ENCODE measurements at regions of chr2 and their contacts with region 1.

Region 1: DNA sequence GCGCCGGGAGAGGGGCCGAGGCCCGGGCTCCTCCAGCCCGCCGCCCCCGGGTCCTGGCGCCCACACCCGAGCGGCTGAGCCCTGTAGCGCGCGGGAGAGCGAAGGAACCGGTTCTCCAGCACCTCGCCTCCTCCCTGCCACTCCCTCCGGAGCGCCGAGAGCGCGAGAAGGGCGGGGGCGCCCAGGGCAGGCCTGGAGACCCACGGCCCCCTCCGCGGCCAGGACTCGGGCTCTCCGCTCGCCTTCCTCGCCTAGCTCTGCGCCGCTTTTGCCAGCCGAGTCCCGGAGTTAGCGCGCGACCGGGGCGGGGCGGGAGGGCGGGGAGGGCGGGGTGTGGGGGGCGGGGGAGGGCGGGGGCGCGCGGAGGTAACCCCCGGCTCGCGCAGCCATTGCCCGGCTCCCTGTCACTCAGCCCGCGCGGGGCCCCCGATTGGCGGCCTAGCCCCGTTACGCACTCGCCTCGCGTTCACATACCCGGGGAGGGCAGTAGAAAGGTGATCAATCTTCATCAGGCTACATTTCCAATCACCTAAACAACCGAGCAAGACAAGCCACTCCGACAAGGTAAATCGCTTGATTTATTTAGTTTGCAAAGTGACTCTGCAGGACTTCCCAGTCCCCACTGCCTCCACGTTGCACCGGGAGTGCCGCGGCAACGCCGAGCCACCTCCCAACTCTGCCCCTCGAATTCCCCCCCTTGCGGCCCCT is at the start of gene OTX1:
- DNase-seq: peak; percentile 80
- ATAC-seq: peak; percentile 80
- H3K4me3 Mint-ChIP-seq: peak within 1 kb of the TSS; percentile 75
- H3K27ac Mint-ChIP-seq: peak within 1 kb of the TSS; percentile 47
- H3K4me1 Mint-ChIP-seq: peaks cover 60% of the 10 kb centered on the region
- H3K27me3 Mint-ChIP-seq: peaks cover 78% of the 10 kb centered on the region
- total RNA-seq, gene OTX1: not detected

Region 2: DNA sequence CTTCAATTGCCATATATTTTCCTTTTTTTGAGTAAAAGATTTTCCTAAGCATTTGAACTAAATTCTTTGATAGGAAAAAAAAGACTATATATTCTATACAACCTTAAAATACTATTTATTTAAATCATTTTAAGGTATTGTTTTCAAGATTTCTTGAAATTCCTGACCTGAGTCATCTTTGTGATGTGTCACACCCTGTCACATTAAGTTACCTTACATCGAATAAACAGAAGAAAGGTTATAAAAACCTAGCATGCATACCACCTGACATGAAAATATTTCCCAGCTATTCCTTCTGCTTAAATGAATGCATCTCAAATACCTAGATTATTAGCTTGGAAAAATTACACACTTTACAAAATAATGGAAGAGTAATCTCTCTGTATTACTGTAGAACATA is 175.8 kb after region 1 on chr2:
- CTCF ChIA-PET with region 1: no interaction called
- POLR2A ChIA-PET with region 1: no interaction called
- intact Hi-C with region 1: no loop called
- DNase-seq: no peak
- ATAC-seq: no peak
- H3K4me3 Mint-ChIP-seq: no peak overlapping the region
- H3K27ac Mint-ChIP-seq: no peak overlapping the region
- H3K4me1 Mint-ChIP-seq: no peaks in the 10 kb centered on the region
- H3K27me3 Mint-ChIP-seq: no peaks in the 10 kb centered on the region

Region 3: GRCh38 chr2:63432373-63432772 is 381.9 kb after region 1 on chr2:
- CTCF ChIA-PET with region 1: no interaction called
- POLR2A ChIA-PET with region 1: no interaction called
- intact Hi-C with region 1: loop called in 1 of 2 experiments (anchors 10 kb)
- DNase-seq: no peak
- ATAC-seq: no peak
- H3K4me3 Mint-ChIP-seq: no peak overlapping the region
- H3K27ac Mint-ChIP-seq: no peak overlapping the region
- H3K4me1 Mint-ChIP-seq: no peaks in the 10 kb centered on the region
- H3K27me3 Mint-ChIP-seq: no peaks in the 10 kb centered on the region

Region 4: DNA sequence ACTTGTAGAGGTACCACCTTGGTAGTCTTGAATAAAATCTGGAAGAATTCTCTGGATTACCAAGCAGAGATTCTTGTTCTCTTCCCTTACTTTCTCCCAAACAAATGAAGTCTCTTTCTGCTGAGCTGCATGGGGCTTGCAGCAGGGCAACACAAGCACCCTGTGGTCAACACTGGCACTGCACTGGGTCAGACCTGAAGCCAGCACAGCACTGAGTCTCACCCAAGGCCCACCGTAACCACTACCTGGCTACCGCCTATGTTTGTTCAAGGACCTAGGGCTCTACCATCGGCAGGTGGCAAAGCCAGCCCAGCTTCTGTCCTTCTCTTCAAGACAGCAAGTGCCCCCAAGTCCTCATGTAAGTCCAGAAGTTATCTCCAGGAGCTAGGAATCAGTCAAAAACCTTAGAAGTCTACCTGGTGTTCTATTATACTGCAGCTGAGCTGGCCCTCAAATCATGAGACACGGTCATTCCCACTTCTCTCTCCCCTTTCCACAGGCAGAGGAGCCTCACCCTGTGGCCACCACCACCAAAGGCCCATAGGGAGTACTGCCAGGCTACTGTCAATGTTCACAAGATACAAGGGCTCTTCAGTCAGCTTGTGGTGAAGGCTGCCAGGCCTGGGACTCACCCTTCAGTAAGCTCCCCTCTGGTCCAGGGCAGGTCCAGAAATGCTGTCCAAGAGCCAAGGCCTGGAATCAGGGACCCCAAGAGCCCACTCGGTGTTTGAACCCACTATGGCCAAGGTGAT is 950.3 kb after region 1 on chr2:
- CTCF ChIA-PET with region 1: no interaction called
- POLR2A ChIA-PET with region 1: no interaction called
- intact Hi-C with region 1: no loop called
- DNase-seq: no peak
- ATAC-seq: no peak
- H3K4me3 Mint-ChIP-seq: no peak overlapping the region
- H3K27ac Mint-ChIP-seq: no peak overlapping the region
- H3K4me1 Mint-ChIP-seq: peaks cover 11% of the 10 kb centered on the region
- H3K27me3 Mint-ChIP-seq: no peaks in the 10 kb centered on the region

Measured in activated CD4-positive, alpha-beta T cell treated with anti-CD3 and anti-CD28 coated beads for 36 hours (primary cell).